Activated CD8-positive, alpha-beta memory T cell treated with anti-CD3 and anti-CD28 coated beads, Interleukin-2, amount 10 ng/mL, durations not matched to agents 7 days and 5 days (primary cell): ENCODE measurements at regions of chr1 and their contacts with region 1.

Region 1: GRCh38 chr1:246002725-246003441 is 504.2 kb downstream of the SMYD3 start:
- DNase-seq: peak; percentile 87
- ATAC-seq: peak; percentile 74
- H3K4me3 Mint-ChIP-seq: peak overlapping the region; percentile 21
- H3K27ac Mint-ChIP-seq: no peak overlapping the region
- H3K4me1 Mint-ChIP-seq: no peaks in the 10 kb centered on the region
- H3K27me3 Mint-ChIP-seq: no peaks in the 10 kb centered on the region

Region 2: GRCh38 chr1:245156081-245156735 is 846.7 kb before region 1 on chr1:
- CTCF ChIA-PET with region 1: interaction called, 20 read pairs
- DNase-seq: peak; percentile 89
- ATAC-seq: peak; percentile 96
- H3K4me3 Mint-ChIP-seq: peak overlapping the region; percentile 65
- H3K27ac Mint-ChIP-seq: no peak overlapping the region
- H3K4me1 Mint-ChIP-seq: peaks cover 27% of the 10 kb centered on the region
- H3K27me3 Mint-ChIP-seq: peaks cover 69% of the 10 kb centered on the region

Region 3: DNA sequence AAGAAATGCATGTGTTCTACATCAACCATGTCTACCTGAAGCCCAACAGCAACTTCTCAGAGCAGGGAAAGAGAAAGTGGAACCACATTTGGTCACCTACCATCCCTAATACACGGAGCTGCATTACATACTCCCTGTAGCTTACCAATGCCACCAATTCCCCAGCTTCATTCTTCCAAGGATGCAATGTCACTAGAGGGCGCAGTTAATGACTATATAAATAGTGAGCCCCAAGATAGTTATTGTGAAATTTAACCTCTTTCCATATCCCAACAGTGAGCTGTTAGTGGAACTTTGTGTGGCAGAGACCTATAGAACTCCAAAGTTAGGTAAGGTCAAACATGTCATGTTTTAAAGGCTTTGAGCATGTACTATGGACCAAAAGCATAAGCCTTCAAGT is 114.1 kb before region 1 on chr1:
- CTCF ChIA-PET with region 1: interaction called, 10 read pairs
- DNase-seq: no peak
- ATAC-seq: no peak
- H3K4me3 Mint-ChIP-seq: no peak overlapping the region
- H3K27ac Mint-ChIP-seq: no peak overlapping the region
- H3K4me1 Mint-ChIP-seq: no peaks in the 10 kb centered on the region
- H3K27me3 Mint-ChIP-seq: no peaks in the 10 kb centered on the region

Region 4: GRCh38 chr1:246518441-246519205 is 515.7 kb after region 1 on chr1:
- CTCF ChIA-PET with region 1: no interaction called
- DNase-seq: peak; percentile 18
- ATAC-seq: no peak
- H3K4me3 Mint-ChIP-seq: no peak overlapping the region
- H3K27ac Mint-ChIP-seq: no peak overlapping the region
- H3K4me1 Mint-ChIP-seq: peaks cover 8% of the 10 kb centered on the region
- H3K27me3 Mint-ChIP-seq: no peaks in the 10 kb centered on the region